ENCODE measurements at regions of chr9 and their contacts with region 1.

Region 1: GRCh38 chr9:76419782-76420380 is 25.7 kb upstream of the RFK start:
- DNase-seq: peak in 2 of 9 experiments; percentile 26 to 32
- ATAC-seq: no peak
- H3K4me3 ChIP-seq: no peak overlapping the region
- H3K4me3 Mint-ChIP-seq: no peak overlapping the region
- H3K27ac ChIP-seq: no peak overlapping the region
- H3K27ac Mint-ChIP-seq: no peak overlapping the region
- H3K4me1 ChIP-seq: no peaks in the 10 kb centered on the region
- H3K4me1 Mint-ChIP-seq: peaks cover 5% of the 10 kb centered on the region
- H3K27me3 ChIP-seq: no peaks in the 10 kb centered on the region
- H3K27me3 Mint-ChIP-seq: no peaks in the 10 kb centered on the region
- CTCF ChIP-seq: peak; percentile 29

Region 2: GRCh38 chr9:76403352-76403751 is 16.5 kb before region 1 on chr9:
- CTCF ChIA-PET with region 1: interaction called, 14 read pairs
- POLR2A ChIA-PET with region 1: no interaction called
- intact Hi-C with region 1: no loop called
- DNase-seq: peak in 3 of 9 experiments; percentile 15 to 79 (median 63)
- ATAC-seq: peak; percentile 96
- H3K4me3 ChIP-seq: peak overlapping the region in 1 of 2 experiments; percentile 5
- H3K4me3 Mint-ChIP-seq: peak overlapping the region; percentile 66
- H3K27ac ChIP-seq: peak overlapping the region in 1 of 2 experiments; percentile 20
- H3K27ac Mint-ChIP-seq: peak overlapping the region; percentile 71
- H3K4me1 ChIP-seq: peaks cover 5% of the 10 kb centered on the region
- H3K4me1 Mint-ChIP-seq: peaks cover 9% of the 10 kb centered on the region
- H3K27me3 ChIP-seq: no peaks in the 10 kb centered on the region
- H3K27me3 Mint-ChIP-seq: no peaks in the 10 kb centered on the region
- CTCF ChIP-seq: peak; percentile 61

Region 3: DNA sequence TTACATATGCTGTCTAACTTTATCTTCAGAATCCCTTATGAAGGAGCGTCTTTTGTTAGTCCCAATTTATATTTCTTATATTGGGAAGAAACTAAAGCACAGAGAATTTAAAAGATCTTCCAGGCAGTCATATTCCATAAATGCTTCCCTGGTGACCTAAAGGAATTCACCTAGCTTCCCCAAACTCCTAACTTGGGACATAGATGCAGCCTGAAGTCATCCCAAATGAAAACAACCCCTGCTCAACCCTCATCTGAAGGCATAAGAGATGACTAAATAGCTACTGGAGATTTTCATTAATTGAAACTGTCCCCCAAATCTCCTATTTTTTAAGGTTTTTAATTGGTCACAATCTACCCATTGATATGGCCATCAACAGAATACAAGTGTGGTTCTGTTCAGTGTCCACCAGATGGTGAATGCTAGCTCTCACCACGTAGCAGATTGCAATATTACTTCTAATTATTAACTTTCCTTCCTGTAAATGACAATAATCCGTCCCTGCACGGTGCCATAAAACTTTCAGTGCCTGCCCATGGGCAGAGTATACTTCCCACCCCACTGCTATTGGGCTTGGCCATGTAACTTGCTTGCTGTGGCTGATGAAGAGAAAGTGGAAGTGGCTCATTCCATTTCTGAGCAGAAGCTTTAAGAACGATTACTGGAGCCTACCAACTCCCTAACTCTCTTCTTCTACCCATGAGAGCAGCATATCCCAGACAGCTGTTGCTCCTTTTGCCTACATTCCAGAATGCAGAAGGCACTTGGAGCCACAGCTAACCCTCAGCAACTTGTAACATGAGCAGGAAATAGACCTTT is 467.3 kb after region 1 on chr9:
- CTCF ChIA-PET with region 1: no interaction called
- POLR2A ChIA-PET with region 1: no interaction called
- intact Hi-C with region 1: no loop called
- DNase-seq: no peak
- ATAC-seq: no peak
- H3K4me3 ChIP-seq: no peak overlapping the region
- H3K4me3 Mint-ChIP-seq: no peak overlapping the region
- H3K27ac ChIP-seq: no peak overlapping the region
- H3K27ac Mint-ChIP-seq: no peak overlapping the region
- H3K4me1 ChIP-seq: no peaks in the 10 kb centered on the region
- H3K4me1 Mint-ChIP-seq: no peaks in the 10 kb centered on the region
- H3K27me3 ChIP-seq: no peaks in the 10 kb centered on the region
- H3K27me3 Mint-ChIP-seq: no peaks in the 10 kb centered on the region
- CTCF ChIP-seq: no peak